OCI-LY7 (cell line): ENCODE measurements at regions of chr17 and their contacts with region 1.

Region 1: GRCh38 chr17:42980398-42981397 is at the start of gene RUNDC1:
- DNase-seq: peak; percentile 94
- H3K4me3 ChIP-seq: peak within 1 kb of the TSS; percentile 78
- H3K27ac ChIP-seq: peak within 1 kb of the TSS; percentile 84
- H3K4me1 ChIP-seq: peaks cover 41% of the 10 kb centered on the region
- CTCF ChIP-seq: peak; percentile 50
- total RNA-seq, gene RUNDC1: 11.1 and 12.1 TPM in 2 replicates

Region 2: GRCh38 chr17:42964161-42964932 is 16.4 kb before region 1 on chr17 and contains the start of gene AARSD1:
- CTCF ChIA-PET with region 1: no interaction called
- POLR2A ChIA-PET with region 1: interaction called, 5 read pairs
- intact Hi-C with region 1: loop called (anchors 1 kb)
- DNase-seq: peak; percentile 86
- H3K4me3 ChIP-seq: peak within 1 kb of the TSS; percentile 92
- H3K27ac ChIP-seq: peak within 1 kb of the TSS; percentile 41
- H3K4me1 ChIP-seq: peaks cover 31% of the 10 kb centered on the region
- CTCF ChIP-seq: no peak; the same call in 1 of the 2 replicates
- total RNA-seq, gene AARSD1: 24.0 and 26.9 TPM in 2 replicates